Dorsolateral prefrontal cortex (tissue), 120 donors: ENCODE measurements at regions of chr10 and their contacts with region 1.

Region 1: GRCh38 chr10:119859420-119860258 is 13.0 kb downstream of the MCMBP start:
- DNase-seq: no peak
- H3K4me3 ChIP-seq: no peak overlapping the region
- H3K27ac ChIP-seq: peak overlapping the region in 2 of 59 donors; percentile 12 to 16
- H3K27me3 ChIP-seq: no peaks in the 10 kb centered on the region
- CTCF ChIP-seq: peak; percentile 59 to 94 (median 74)

Region 2: GRCh38 chr10:119608316-119609155 is 251.1 kb before region 1 on chr10:
- intact Hi-C with region 1: loop called in 1 of 2 experiments (anchors 2 kb)
- DNase-seq: peak; percentile 42 to 81 (median 66)
- H3K4me3 ChIP-seq: peak overlapping the region in 56 of 59 donors; percentile 6 to 61 (median 42)
- H3K27ac ChIP-seq: peak overlapping the region in 3 of 59 donors; percentile 11 to 32 (median 27)
- H3K27me3 ChIP-seq: no peaks in the 10 kb centered on the region
- CTCF ChIP-seq: peak in 55 of 56 donors; percentile 44 to 84 (median 65)